ENCODE measurements at regions of chr6 and their contacts with region 1.

Region 1: DNA sequence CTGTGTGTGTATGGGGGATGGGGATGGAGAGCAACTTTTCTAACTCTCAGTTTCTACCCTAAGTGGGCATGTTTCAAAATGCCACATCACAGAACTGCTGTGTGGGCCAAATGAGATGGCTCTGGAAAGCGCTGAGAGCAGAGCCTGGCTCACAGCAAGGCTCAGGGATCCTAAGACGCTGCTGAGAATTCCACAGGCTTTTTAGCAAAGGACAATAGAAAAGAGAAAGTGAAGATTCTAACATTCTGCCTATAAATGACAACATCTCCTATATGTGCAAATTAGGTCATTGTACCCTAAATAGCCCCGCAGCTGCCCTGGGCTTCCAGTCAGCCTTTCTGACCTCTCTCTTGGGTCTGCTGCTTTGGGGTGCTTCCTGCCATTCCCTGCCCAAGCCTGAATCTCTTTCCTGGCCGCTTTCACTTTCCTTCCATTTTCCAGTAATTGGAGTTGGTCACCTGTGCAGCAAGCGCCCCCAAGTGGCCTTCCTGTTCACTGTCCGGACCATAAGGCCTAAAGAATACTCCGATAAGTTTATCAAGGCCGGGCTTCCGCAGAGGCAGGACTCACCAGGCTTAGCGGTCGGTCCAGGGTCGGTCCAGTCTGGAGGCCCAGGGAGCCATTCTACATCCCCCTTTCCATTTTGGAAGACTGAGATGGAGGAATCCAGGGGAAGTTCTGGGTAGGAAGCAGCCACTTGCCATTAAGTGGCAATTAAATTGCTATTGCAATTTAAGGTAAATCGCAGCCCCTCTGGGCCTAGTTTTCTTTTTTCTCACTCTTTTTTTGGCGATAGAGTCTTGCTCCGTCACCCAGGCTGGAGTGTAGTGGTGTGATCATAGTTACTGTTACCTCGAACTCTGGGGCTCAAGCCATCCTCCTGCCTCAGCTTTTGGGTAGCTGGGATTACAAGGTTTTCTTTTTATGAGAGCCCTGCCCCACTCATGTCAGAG is 6.6 kb upstream of the DDR1 start:
- DNase-seq: peak; percentile 83
- H3K4me3 Mint-ChIP-seq: peak overlapping the region; percentile 62
- H3K27ac Mint-ChIP-seq: peak overlapping the region; percentile 78
- H3K4me1 Mint-ChIP-seq: peaks cover 20% of the 10 kb centered on the region
- H3K27me3 Mint-ChIP-seq: no peaks in the 10 kb centered on the region

Region 2: GRCh38 chr6:30349421-30350177 is 528.1 kb before region 1 on chr6:
- CTCF ChIA-PET with region 1: no interaction called
- POLR2A ChIA-PET with region 1: no interaction called
- intact Hi-C with region 1: no loop called
- DNase-seq: no peak
- H3K4me3 Mint-ChIP-seq: no peak overlapping the region
- H3K27ac Mint-ChIP-seq: no peak overlapping the region
- H3K4me1 Mint-ChIP-seq: peaks cover 41% of the 10 kb centered on the region
- H3K27me3 Mint-ChIP-seq: peaks cover 8% of the 10 kb centered on the region

Region 3: DNA sequence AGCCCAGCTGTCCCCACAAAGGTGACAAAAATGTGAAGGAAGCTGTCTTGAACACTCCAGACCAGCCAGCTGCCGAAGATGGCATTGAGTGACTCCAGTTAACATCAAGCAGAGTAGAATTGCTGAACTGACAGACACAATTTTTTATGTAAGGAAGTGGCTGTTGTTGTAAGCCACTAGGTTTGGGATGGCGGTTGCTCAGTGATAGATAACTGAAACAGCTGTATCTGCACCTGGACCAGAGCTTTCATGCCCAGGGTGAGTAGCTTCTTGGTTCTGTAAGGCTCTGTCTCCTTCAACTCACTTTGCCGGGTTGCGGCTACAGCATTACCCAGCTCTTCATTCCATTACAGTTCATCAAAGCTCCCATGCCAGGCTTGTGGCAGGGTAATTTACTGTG is 43.1 kb before region 1 on chr6:
- CTCF ChIA-PET with region 1: interaction called, 28 read pairs
- POLR2A ChIA-PET with region 1: no interaction called
- intact Hi-C with region 1: no loop called
- DNase-seq: no peak
- H3K4me3 Mint-ChIP-seq: no peak overlapping the region
- H3K27ac Mint-ChIP-seq: peak overlapping the region; percentile 33
- H3K4me1 Mint-ChIP-seq: peaks cover 31% of the 10 kb centered on the region
- H3K27me3 Mint-ChIP-seq: no peaks in the 10 kb centered on the region

Region 4: GRCh38 chr6:31007694-31008093 is 130.0 kb after region 1 on chr6:
- CTCF ChIA-PET with region 1: no interaction called
- POLR2A ChIA-PET with region 1: no interaction called
- intact Hi-C with region 1: no loop called
- DNase-seq: no peak
- H3K4me3 Mint-ChIP-seq: no peak overlapping the region
- H3K27ac Mint-ChIP-seq: no peak overlapping the region
- H3K4me1 Mint-ChIP-seq: peaks cover 17% of the 10 kb centered on the region
- H3K27me3 Mint-ChIP-seq: peaks cover 31% of the 10 kb centered on the region

Measured in activated CD4-positive, alpha-beta memory T cell treated with anti-CD3 and anti-CD28 coated beads for 36 hours (primary cell).